ENCODE measurements at regions of chr3 and their contacts with region 1.

Region 1: DNA sequence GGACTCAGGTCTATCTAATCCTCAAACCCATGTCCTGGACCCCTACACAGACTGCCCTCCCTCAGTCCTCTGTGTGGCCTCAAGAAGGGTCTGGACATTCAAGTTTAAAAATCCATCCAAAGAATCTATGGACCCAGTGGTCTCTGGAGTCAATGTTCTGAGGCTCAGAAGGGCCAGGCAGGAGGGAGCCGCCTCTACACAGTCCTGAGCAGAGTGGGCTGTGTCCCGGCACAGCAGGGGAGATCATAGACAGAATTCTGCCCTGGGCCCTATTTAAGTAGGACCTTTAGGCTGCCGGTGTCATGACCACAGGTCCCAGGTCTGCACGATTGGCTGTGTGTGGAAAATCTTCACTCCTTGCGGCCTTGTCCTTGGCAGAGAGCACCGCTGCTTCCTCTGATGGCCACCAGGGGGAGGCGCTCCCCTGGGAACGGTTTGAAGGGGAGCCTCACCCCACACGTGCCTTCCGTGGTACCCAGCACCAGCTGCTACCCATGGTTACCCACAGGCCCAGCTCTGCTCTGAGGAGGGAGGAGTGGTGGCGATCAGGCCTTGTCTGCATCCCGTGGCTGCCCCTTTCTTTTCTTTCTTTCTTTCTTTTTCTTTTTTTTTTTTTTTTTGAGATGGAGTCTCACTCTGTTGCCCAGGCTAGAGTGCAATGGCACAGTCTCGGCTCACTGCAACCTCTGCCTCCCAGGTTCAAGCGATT is 37.9 kb downstream of the CHRD start:
- DNase-seq: peak; percentile 79 to 89
- ATAC-seq: peak; percentile 88
- H3K4me3 ChIP-seq: no peak overlapping the region
- H3K27ac ChIP-seq: no peak overlapping the region
- H3K4me1 ChIP-seq: no peaks in the 10 kb centered on the region
- H3K27me3 ChIP-seq: no peaks in the 10 kb centered on the region

Region 2: GRCh38 chr3:184261270-184261853 is 156.4 kb before region 1 on chr3 and contains the start of gene CAMK2N2:
- intact Hi-C with region 1: no loop called
- DNase-seq: peak; percentile 64 to 85
- ATAC-seq: no peak
- H3K4me3 ChIP-seq: peak within 1 kb of the TSS; percentile 47 to 52
- H3K27ac ChIP-seq: no peak within 1 kb of the TSS
- H3K4me1 ChIP-seq: no peaks in the 10 kb centered on the region
- H3K27me3 ChIP-seq: peaks cover 0 to 2% of the 10 kb centered on the region in 2 donors
- total RNA-seq, gene CAMK2N2: 0.26 to 0.36 TPM

Region 3: GRCh38 chr3:184405075-184406030 is 12.4 kb before region 1 on chr3:
- intact Hi-C with region 1: no loop called
- DNase-seq: peak in 1 of 2 donors; percentile 63
- ATAC-seq: no peak
- H3K4me3 ChIP-seq: no peak overlapping the region
- H3K27ac ChIP-seq: no peak overlapping the region
- H3K4me1 ChIP-seq: no peaks in the 10 kb centered on the region
- H3K27me3 ChIP-seq: no peaks in the 10 kb centered on the region

Region 4: DNA sequence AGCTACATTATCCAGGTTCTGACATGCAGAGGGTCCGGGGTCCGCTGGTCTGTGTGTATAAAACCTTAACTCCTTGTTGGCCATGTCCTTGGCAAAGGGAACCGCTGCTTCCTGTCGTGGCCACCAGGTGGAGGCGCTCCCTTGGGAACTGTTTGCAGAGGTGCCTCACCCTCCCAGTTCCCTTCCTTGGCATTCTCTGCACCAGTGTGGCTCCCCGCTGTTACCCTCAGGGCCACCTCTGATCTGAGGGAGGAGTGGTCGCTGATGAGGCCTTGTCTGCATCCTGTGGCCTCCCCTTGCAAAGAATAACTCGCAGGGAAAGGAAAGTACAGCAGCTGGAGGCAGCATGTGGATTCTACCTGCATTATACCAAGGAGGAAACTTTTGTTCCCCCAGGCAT is 51.6 kb after region 1 on chr3:
- intact Hi-C with region 1: loop called in 1 of 2 experiments (anchors 1 kb)
- DNase-seq: no peak
- ATAC-seq: no peak
- H3K4me3 ChIP-seq: no peak overlapping the region
- H3K27ac ChIP-seq: no peak overlapping the region
- H3K4me1 ChIP-seq: no peaks in the 10 kb centered on the region
- H3K27me3 ChIP-seq: no peaks in the 10 kb centered on the region

Region 5: GRCh38 chr3:184513276-184514170 is 95.8 kb after region 1 on chr3:
- intact Hi-C with region 1: loop called in 1 of 2 experiments (anchors 5 kb)
- DNase-seq: peak; percentile 92 to 94
- ATAC-seq: peak; percentile 95
- H3K4me3 ChIP-seq: no peak overlapping the region
- H3K27ac ChIP-seq: no peak overlapping the region
- H3K4me1 ChIP-seq: no peaks in the 10 kb centered on the region
- H3K27me3 ChIP-seq: no peaks in the 10 kb centered on the region

Measured in aorta (tissue), 5 donors.